ENCODE measurements at regions of chr10 and their contacts with region 1.

Region 1: DNA sequence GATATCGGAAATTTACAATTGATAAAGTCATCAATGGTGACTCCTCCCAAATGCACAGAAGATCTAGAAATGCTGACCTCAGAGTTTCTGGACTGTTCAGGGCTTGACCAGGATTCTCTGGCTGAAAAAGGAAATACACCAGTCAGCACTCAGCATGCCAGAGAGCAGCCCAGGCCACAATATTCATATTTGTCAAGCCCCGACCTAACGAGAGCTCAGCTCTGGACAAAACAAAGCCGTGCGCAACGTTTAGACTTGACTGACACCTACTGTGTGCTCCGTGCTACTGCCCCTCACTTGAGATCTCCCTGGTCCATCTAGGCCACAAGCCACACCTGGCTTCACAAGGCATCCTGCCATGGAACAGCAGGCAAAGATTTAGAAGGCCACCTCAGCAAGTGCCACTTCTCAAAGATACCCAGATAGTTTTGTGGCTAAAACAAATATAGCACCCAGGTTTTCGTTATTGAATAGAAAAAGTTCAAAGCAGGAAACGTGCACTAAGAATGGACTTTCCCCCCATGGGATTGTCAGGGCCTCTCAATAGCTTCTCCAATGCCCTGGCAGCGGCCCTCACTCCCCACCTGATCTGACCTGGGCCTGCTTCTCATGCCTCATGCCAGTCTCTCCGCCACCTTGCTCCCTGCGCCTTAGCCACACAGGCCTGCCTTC is 218.3 kb downstream of the FAM107B start:
- DNase-seq: no peak
- ATAC-seq: peak; percentile 47
- H3K4me3 ChIP-seq: no peak overlapping the region
- H3K4me3 Mint-ChIP-seq: peak overlapping the region; percentile 9 to 86 (median 73)
- H3K27ac ChIP-seq: peak overlapping the region; percentile 37
- H3K27ac Mint-ChIP-seq: peak overlapping the region; percentile 52 to 97 (median 93)
- H3K4me1 ChIP-seq: peaks cover 90 to 94% of the 10 kb centered on the region in 2 donors
- H3K4me1 Mint-ChIP-seq: peaks cover 84 to 100% (median 92%) of the 10 kb centered on the region in 7 donors
- H3K27me3 ChIP-seq: no peaks in the 10 kb centered on the region
- H3K27me3 Mint-ChIP-seq: no peaks in the 10 kb centered on the region

Region 2: GRCh38 chr10:14405076-14406065 is 151.1 kb before region 1 on chr10:
- CTCF ChIA-PET with region 1: no interaction called
- POLR2A ChIA-PET with region 1: no interaction called
- intact Hi-C with region 1: no loop called
- DNase-seq: no peak
- ATAC-seq: no peak
- H3K4me3 ChIP-seq: no peak overlapping the region
- H3K4me3 Mint-ChIP-seq: no peak overlapping the region
- H3K27ac ChIP-seq: no peak overlapping the region
- H3K27ac Mint-ChIP-seq: no peak overlapping the region
- H3K4me1 ChIP-seq: peaks cover 7 to 10% of the 10 kb centered on the region in 2 donors
- H3K4me1 Mint-ChIP-seq: peaks cover 7 to 20% (median 13%) of the 10 kb centered on the region in 7 donors
- H3K27me3 ChIP-seq: no peaks in the 10 kb centered on the region
- H3K27me3 Mint-ChIP-seq: peaks cover 8 to 49% (median 40%) of the 10 kb centered on the region in 5 donors

Region 3: DNA sequence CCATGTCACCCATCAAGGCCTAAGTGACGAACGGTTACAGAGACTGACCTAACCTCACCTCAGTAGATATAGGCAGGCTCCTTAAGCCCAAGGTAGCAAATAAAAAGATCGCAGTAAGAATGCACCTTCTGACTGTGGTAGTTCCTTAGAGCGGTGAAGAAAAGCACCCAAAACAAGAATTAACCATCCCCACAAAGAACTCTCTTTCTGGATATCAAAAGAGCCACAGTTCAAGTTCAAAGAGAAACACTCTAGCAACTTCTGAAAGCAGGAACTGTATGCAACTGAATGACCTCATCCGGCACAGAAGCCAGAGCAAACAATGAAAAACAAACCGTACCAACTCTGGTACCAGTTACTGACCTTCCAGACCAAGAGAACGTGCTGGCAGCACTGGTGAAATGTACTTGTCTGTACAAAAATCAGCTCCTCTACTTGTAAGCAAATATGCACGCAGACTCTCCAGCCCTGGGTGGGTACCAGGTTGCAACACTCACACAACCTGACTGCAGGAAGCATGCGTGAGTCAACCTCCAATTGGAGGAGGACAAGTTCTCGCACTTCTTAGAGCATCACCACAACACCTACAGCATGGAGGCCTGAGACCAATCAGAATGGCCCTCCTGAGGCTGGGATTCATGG is 15.6 kb after region 1 on chr10:
- CTCF ChIA-PET with region 1: interaction called, 5 read pairs
- POLR2A ChIA-PET with region 1: interaction called, 429 read pairs
- intact Hi-C with region 1: loop called (anchors 1 kb)
- DNase-seq: peak in 8 of 9 donors; percentile 47 to 94 (median 90)
- ATAC-seq: peak; percentile 80
- H3K4me3 ChIP-seq: peak overlapping the region; percentile 67
- H3K4me3 Mint-ChIP-seq: peak overlapping the region; percentile 86 to 98 (median 96)
- H3K27ac ChIP-seq: peak overlapping the region; percentile 87
- H3K27ac Mint-ChIP-seq: peak overlapping the region; percentile 93 to 100 (median 99)
- H3K4me1 ChIP-seq: peaks cover 40 to 53% of the 10 kb centered on the region in 2 donors
- H3K4me1 Mint-ChIP-seq: peaks cover 42 to 88% (median 79%) of the 10 kb centered on the region in 7 donors
- H3K27me3 ChIP-seq: no peaks in the 10 kb centered on the region
- H3K27me3 Mint-ChIP-seq: no peaks in the 10 kb centered on the region

Region 4: DNA sequence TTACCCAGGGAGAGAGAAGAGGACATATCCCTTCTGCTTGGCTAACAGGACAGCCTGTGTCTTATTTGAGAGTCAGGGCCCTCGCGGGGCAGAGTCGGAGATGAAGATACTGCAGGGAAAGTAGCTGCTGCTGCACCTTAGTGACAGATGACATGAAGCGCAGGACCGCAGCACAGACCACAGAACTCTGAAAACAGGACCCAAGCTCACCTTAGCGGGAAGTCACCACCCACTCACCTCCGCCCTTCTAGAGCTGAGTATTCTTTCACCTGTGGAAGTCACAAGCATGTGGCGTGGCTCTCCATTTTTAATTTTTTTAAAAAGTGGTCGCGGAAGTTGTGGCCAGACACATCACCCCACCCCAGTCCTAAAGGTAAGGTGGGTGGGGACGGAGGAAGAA is 26.8 kb after region 1 on chr10:
- CTCF ChIA-PET with region 1: interaction called, 8 read pairs
- POLR2A ChIA-PET with region 1: interaction called, 429 read pairs
- intact Hi-C with region 1: loop called (anchors 1 kb)
- DNase-seq: peak; percentile 47 to 92 (median 87)
- ATAC-seq: peak; percentile 79
- H3K4me3 ChIP-seq: peak overlapping the region; percentile 10
- H3K4me3 Mint-ChIP-seq: peak overlapping the region; percentile 76 to 90 (median 82)
- H3K27ac ChIP-seq: peak overlapping the region; percentile 83
- H3K27ac Mint-ChIP-seq: peak overlapping the region; percentile 96 to 100 (median 99)
- H3K4me1 ChIP-seq: peaks cover 75 to 77% of the 10 kb centered on the region in 2 donors
- H3K4me1 Mint-ChIP-seq: peaks cover 69 to 99% (median 92%) of the 10 kb centered on the region in 7 donors
- H3K27me3 ChIP-seq: no peaks in the 10 kb centered on the region
- H3K27me3 Mint-ChIP-seq: no peaks in the 10 kb centered on the region

Region 5: GRCh38 chr10:14588084-14588937 is 31.9 kb after region 1 on chr10:
- CTCF ChIA-PET with region 1: interaction called, 8 read pairs
- POLR2A ChIA-PET with region 1: interaction called, 429 read pairs
- intact Hi-C with region 1: loop called (anchors 1 kb)
- DNase-seq: peak in 6 of 9 donors; percentile 24 to 60 (median 44)
- ATAC-seq: peak; percentile 20
- H3K4me3 ChIP-seq: peak overlapping the region; percentile 31
- H3K4me3 Mint-ChIP-seq: peak overlapping the region; percentile 76 to 88 (median 84)
- H3K27ac ChIP-seq: peak overlapping the region; percentile 83
- H3K27ac Mint-ChIP-seq: peak overlapping the region; percentile 96 to 100 (median 99)
- H3K4me1 ChIP-seq: peaks cover 73 to 76% of the 10 kb centered on the region in 2 donors
- H3K4me1 Mint-ChIP-seq: peaks cover 52 to 94% (median 93%) of the 10 kb centered on the region in 7 donors
- H3K27me3 ChIP-seq: no peaks in the 10 kb centered on the region
- H3K27me3 Mint-ChIP-seq: no peaks in the 10 kb centered on the region

Region 6: GRCh38 chr10:14723052-14723689 is 166.8 kb after region 1 on chr10:
- CTCF ChIA-PET with region 1: no interaction called
- POLR2A ChIA-PET with region 1: no interaction called
- intact Hi-C with region 1: loop called in 1 of 2 experiments (anchors 5 kb)
- DNase-seq: peak in 8 of 9 donors; percentile 24 to 64 (median 52)
- ATAC-seq: peak; percentile 90
- H3K4me3 ChIP-seq: peak overlapping the region; percentile 36
- H3K4me3 Mint-ChIP-seq: peak overlapping the region; percentile 9 to 71 (median 58)
- H3K27ac ChIP-seq: peak overlapping the region; percentile 53
- H3K27ac Mint-ChIP-seq: peak overlapping the region; percentile 47 to 97 (median 92)
- H3K4me1 ChIP-seq: peaks cover 17 to 33% of the 10 kb centered on the region in 2 donors
- H3K4me1 Mint-ChIP-seq: peaks cover 31 to 43% (median 37%) of the 10 kb centered on the region in 7 donors
- H3K27me3 ChIP-seq: no peaks in the 10 kb centered on the region
- H3K27me3 Mint-ChIP-seq: no peaks in the 10 kb centered on the region

Region 7: DNA sequence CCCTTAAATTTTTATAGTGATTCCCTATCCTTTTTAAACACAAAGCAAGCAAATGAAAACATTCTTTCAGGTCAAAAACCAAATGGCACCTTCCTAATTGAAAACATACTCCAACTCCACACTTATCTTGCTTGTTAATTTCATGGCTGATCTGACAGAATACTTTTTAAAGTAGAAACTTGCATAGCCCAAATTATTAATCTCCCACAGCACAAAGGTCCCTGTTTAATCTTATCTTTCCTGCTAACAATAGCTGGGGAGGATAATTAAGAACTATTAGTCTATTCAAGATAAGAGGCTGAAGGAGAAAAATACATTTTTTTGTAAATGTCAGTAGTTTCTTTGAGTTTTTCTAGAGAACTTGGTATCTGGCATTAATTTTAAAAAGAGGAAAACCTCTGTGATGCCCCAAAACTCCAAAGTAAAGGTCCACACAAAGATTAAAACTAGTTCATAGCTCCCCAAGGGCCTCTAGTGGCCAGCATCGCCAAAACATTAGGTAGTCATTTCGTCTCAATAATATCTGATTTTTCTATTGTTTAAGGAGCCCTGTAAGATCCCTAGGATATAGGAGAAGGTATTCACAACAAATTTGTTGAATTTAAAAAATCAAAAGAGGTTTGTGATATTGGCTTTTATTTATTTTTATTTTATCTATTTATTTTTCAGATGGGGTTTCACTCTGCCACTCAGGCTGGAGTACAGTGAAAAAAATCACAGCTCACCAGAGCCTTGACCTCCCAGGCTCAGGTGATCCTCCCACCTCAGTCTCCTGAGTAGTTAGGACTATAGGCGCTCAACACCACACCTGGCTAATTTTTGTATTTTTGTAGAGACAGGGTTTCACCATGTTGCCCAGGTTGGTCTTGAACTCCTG is 266.7 kb after region 1 on chr10:
- CTCF ChIA-PET with region 1: interaction called, 5 read pairs
- POLR2A ChIA-PET with region 1: interaction called, 3 read pairs
- intact Hi-C with region 1: loop called in 1 of 2 experiments (anchors 1 kb)
- DNase-seq: peak in 6 of 9 donors; percentile 14 to 54 (median 38)
- ATAC-seq: peak; percentile 64
- H3K4me3 ChIP-seq: no peak overlapping the region
- H3K4me3 Mint-ChIP-seq: no peak overlapping the region
- H3K27ac ChIP-seq: no peak overlapping the region
- H3K27ac Mint-ChIP-seq: peak overlapping the region in 4 of 9 donors; percentile 5 to 14 (median 10)
- H3K4me1 ChIP-seq: no peaks in the 10 kb centered on the region
- H3K4me1 Mint-ChIP-seq: peaks cover 0 to 15% (median 3%) of the 10 kb centered on the region in 7 donors
- H3K27me3 ChIP-seq: no peaks in the 10 kb centered on the region
- H3K27me3 Mint-ChIP-seq: peaks cover 0 to 10% (median 0%) of the 10 kb centered on the region in 5 donors